Mammary epithelial cell (primary cell): ENCODE measurements at regions of chr11 and their contacts with region 1.

Region 1: DNA sequence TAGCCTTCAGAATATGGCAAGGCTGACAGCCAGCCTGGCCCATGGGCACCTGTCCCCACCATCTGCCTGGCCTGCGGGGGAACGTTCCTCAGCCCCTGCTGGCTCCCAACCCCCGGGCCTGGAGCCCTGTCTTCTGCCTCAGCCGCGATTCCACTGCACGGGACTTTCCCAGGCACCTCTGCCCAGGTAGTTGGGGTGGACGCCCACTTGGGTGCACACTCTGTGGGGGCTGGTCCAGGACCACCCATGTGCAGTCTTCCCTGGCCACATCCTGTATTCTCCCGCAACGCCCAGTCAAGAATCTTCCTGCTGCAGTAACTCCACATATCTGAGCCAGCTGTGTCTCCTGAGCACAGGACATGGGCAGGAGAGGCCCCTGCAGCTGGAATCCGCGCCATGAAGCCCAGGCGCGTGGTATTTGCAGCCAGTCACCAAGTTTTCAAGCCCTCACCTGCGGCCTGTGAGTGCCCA is 77.9 kb downstream of the KCNQ1 start:
- DNase-seq: no peak
- H3K4me3 ChIP-seq: no peak overlapping the region
- H3K27ac ChIP-seq: no peak overlapping the region
- H3K4me1 ChIP-seq: no peaks in the 10 kb centered on the region
- H3K27me3 ChIP-seq: peaks cover 5% of the 10 kb centered on the region
- CTCF ChIP-seq: no peak

Region 2: DNA sequence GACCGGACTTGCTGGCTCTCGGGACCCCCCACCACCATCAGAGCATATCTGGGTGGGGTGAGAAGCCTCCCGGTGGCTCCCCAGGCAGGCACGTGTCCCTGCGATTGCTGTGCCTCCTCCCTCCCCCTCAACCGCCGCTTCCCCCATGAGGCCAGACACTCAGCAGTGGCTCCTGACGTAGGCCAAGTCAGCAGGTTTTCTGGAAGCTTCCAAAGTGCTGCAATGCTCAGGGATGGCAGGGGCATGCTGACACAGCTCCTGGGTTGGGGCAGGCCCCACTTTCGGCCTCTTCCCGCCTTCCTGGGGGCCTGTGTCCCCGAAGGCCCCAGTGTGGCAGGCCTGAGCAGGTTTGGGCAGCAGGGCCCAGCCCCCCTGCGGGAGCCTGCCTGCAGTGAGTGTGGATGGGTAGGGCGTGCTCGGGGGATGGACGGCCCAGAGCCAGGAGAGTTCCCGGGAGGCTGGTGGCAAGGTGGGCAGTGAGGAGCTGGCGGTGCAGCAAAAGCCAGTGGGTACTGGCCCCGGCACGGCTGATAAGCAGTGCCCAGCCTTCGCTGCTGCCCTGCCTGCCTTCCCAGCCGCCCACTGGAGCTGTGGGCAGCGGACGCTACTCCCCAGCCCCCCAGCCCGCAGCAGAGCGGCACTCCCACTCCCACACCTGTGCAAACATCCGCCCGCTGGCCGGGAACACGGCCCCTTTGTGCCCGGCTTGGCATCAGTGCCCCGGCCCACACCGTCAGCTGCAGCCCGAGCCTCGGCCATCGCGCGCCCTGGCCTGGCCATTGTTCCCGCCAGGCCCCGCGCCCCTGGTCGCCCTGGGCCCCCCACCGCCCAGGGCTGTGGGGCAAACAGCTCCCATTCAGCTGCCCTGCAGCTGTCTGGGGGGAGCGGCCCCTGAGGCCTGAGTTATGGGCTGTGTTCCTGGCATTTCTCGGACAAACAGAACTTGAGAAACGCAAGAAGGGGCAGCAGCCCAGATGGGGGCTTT is 52.1 kb after region 1 on chr11:
- CTCF ChIA-PET with region 1: no interaction called
- dilution Hi-C with region 1: loop called (anchors 5 kb)
- in situ Hi-C with region 1: no loop called
- intact Hi-C with region 1: no loop called
- DNase-seq: peak; percentile 24
- H3K4me3 ChIP-seq: no peak overlapping the region
- H3K27ac ChIP-seq: no peak overlapping the region
- H3K4me1 ChIP-seq: peaks cover 5% of the 10 kb centered on the region
- H3K27me3 ChIP-seq: peaks cover 2% of the 10 kb centered on the region
- CTCF ChIP-seq: no peak

Region 3: DNA sequence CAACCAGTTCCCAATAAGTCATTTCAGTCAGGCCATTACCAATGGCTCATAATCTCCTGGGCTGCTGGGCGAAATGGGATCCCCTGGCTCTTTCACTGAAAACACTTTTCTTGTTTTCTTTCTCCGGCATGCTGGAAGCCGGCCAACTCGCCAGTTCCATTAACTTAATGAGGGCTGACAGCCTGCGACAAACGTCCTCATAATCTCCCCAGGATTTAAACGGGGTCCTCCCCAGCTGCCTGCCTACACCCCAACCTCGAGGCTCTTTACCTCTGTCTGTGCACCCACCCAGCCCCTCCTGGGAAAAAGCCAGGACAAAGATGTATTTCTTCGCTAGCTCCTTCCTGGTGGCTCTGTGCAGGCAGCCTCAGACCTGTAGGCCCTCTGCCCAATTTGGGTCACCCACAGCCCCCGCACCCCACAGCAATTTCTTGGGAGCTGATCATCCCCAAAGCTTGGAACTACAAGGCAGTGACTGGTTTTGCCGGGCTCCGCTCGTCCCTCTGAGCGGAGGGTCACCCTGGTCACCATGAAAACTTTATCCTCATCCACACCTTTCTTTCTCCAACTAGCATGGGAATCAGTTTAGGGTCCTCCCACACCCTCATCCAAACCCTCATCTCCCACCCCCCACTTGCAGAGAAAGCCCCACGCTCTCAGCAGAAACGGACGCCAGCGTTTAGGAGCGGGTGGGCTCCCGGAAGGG is 228.1 kb after region 1 on chr11:
- CTCF ChIA-PET with region 1: no interaction called
- dilution Hi-C with region 1: no loop called
- in situ Hi-C with region 1: no loop called
- intact Hi-C with region 1: no loop called
- DNase-seq: no peak
- H3K4me3 ChIP-seq: no peak overlapping the region
- H3K27ac ChIP-seq: no peak overlapping the region
- H3K4me1 ChIP-seq: no peaks in the 10 kb centered on the region
- H3K27me3 ChIP-seq: peaks cover 2% of the 10 kb centered on the region
- CTCF ChIP-seq: no peak